ENCODE measurements at regions of chr10 and their contacts with region 1.

Region 1: GRCh38 chr10:16995867-16996529 is 133.6 kb downstream of the CUBN start:
- DNase-seq: peak; percentile 96
- H3K4me3 ChIP-seq: peak overlapping the region in 1 of 3 experiments; percentile 39
- H3K27ac ChIP-seq: peak overlapping the region; percentile 98
- H3K4me1 ChIP-seq: peaks cover 57% of the 10 kb centered on the region
- H3K27me3 ChIP-seq: no peaks in the 10 kb centered on the region
- CTCF ChIP-seq: no peak
- POLR2A ChIP-seq: peak; percentile 76

Region 2: GRCh38 chr10:16828114-16828568 is 167.9 kb before region 1 on chr10:
- CTCF ChIA-PET with region 1: interaction called, 3 read pairs
- POLR2A ChIA-PET with region 1: no interaction called
- dilution Hi-C with region 1: no loop called
- intact Hi-C with region 1: loop called (anchors 1 kb)
- DNase-seq: peak; percentile 93
- H3K4me3 ChIP-seq: peak overlapping the region in 1 of 3 experiments; percentile 51
- H3K27ac ChIP-seq: peak overlapping the region; percentile 71
- H3K4me1 ChIP-seq: peaks cover 34% of the 10 kb centered on the region
- H3K27me3 ChIP-seq: no peaks in the 10 kb centered on the region
- CTCF ChIP-seq: peak; percentile 35 to 39
- POLR2A ChIP-seq: no peak

Region 3: DNA sequence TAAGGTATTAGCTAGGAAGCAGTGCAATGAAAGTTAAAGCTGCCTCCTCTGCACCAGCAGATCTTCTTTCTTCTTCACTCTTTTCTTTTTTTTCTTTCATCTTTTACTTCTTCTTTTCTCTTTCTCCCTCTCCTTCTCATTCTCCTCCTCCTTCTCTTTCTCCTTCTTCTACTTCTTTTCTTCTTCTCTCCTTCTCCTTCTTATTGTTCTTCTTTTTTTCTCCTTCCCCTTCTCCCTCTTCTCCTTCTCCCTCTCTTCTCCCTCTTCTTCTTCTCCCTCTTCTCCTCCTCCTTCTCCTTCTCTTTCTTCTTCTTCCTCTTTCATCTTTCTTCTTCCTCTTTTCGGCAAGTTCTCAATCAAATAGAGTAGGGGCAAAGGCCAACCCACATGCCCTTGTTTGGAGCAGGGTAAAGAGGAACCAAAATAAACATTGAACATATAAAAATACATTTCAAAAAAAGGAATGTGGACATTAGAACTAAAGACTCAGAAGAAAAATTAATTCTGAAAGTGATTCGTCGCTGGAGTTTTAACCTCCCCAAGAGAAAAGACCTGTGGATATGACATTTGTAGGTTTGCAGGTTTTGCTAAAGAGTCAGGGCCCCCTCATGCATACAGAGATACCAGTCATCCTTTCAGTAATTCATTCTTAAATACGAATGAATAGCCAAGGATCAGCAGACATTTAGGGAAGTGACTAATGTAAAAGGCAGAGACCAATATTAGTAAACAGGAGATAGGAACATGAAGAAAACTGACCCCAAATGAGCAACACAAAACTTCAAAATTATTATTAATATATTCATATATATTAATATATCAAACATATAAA is 85.8 kb before region 1 on chr10:
- CTCF ChIA-PET with region 1: no interaction called
- POLR2A ChIA-PET with region 1: no interaction called
- dilution Hi-C with region 1: no loop called
- intact Hi-C with region 1: loop called (anchors 1 kb)
- DNase-seq: peak; percentile 60
- H3K4me3 ChIP-seq: no peak overlapping the region
- H3K27ac ChIP-seq: peak overlapping the region; percentile 82
- H3K4me1 ChIP-seq: peaks cover 20% of the 10 kb centered on the region
- H3K27me3 ChIP-seq: no peaks in the 10 kb centered on the region
- CTCF ChIP-seq: no peak
- POLR2A ChIP-seq: no peak

Region 4: DNA sequence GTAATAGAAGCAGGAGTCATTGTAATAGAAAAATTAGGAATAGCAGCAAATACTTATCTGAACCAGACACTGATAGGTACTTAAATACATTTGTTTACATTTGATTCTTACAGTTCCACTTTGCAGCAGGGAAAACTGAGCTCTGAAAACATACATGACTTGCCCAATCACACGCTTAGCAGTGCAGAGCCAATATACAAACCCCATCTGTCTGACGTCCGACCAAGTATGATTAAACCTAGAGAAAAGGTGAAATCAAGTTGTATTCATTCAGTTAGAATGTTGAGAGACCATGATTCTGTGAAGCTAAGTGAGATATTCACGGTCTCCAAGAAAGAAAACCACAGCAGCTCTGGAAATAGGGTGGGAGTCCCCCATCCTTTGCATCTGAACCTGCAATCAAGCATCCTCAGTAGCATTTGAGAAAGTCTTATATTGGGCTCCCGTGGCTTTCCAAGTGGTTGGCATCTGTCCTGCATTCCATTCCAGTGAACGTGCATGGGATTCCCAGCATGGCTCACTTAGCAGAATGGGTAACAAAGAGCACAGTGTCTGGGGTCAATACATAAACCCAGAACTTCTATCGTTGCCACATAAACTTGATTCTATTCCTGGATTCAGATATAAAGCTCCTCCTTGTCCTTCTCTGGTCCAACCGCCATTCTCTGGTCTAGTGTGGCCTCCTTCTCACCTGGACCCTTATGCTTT is 30.1 kb before region 1 on chr10:
- CTCF ChIA-PET with region 1: interaction called, 22 read pairs
- POLR2A ChIA-PET with region 1: interaction called, 19 read pairs
- dilution Hi-C with region 1: no loop called
- intact Hi-C with region 1: loop called (anchors 1 kb)
- DNase-seq: peak; percentile 91
- H3K4me3 ChIP-seq: no peak overlapping the region
- H3K27ac ChIP-seq: peak overlapping the region; percentile 98
- H3K4me1 ChIP-seq: peaks cover 40% of the 10 kb centered on the region
- H3K27me3 ChIP-seq: no peaks in the 10 kb centered on the region
- CTCF ChIP-seq: no peak
- POLR2A ChIP-seq: peak; percentile 44

Region 5: GRCh38 chr10:17029581-17030271 is 33.7 kb after region 1 on chr10:
- CTCF ChIA-PET with region 1: interaction called, 9 read pairs
- POLR2A ChIA-PET with region 1: interaction called, 3 read pairs
- dilution Hi-C with region 1: no loop called
- intact Hi-C with region 1: loop called (anchors 1 kb)
- DNase-seq: peak; percentile 96
- H3K4me3 ChIP-seq: peak overlapping the region in 1 of 3 experiments; percentile 34
- H3K27ac ChIP-seq: peak overlapping the region; percentile 99
- H3K4me1 ChIP-seq: peaks cover 59% of the 10 kb centered on the region
- H3K27me3 ChIP-seq: no peaks in the 10 kb centered on the region
- CTCF ChIP-seq: no peak
- POLR2A ChIP-seq: peak; percentile 71

Region 6: GRCh38 chr10:17200912-17201793 is 205.2 kb after region 1 on chr10 and contains the start of gene TRDMT1:
- CTCF ChIA-PET with region 1: interaction called, 5 read pairs
- POLR2A ChIA-PET with region 1: interaction called, 11 read pairs
- dilution Hi-C with region 1: no loop called
- intact Hi-C with region 1: loop called (anchors 2 kb)
- DNase-seq: peak; percentile 91
- H3K4me3 ChIP-seq: peak within 1 kb of the TSS; percentile 69 to 95 (median 91)
- H3K27ac ChIP-seq: peak within 1 kb of the TSS; percentile 100
- H3K4me1 ChIP-seq: peaks cover 28% of the 10 kb centered on the region
- H3K27me3 ChIP-seq: no peaks in the 10 kb centered on the region
- CTCF ChIP-seq: no peak
- POLR2A ChIP-seq: peak; percentile 86
- total RNA-seq, gene TRDMT1: 12.3 and 15.2 TPM in 2 replicates

Region 7: DNA sequence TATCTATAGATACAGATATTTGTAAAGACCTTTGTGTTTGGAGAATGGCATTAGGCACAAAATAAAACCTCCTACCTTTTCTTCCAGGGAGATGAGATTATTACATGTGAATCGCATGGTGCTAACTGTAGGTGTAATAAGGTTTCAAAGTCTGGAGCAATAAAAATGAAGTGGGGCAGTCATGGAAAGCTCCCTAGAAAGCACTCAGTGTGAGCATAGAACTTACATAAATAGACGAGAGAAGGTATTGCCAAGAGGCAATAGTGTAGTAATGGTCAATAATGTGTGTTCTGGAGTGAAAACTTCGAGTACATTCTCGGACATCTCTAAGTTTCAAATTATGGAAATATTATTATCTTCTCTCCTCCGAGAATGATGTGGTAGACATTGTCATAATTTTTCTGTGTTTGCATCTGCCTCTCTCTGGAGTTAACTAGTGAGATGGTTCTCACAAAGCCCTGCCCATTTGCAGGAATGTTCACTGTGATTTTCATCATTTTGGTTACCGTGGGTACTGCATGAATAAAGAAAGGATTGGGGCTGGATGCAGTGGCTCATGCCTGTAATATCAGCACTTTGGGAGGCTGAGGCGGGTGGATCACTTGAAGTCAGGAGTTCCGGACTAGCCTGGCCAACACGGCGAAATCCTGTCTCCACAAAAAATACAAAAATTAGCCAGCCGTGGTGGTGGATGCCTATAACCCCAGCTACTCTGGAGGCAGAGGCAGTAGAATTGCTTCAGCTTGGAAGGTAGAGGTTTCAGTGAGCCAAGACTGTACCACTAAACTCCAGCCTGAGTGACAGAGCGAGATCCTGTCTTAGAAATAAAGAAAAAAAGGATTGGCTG is 242.7 kb after region 1 on chr10:
- CTCF ChIA-PET with region 1: interaction called, 3 read pairs
- POLR2A ChIA-PET with region 1: interaction called, 5 read pairs
- dilution Hi-C with region 1: no loop called
- intact Hi-C with region 1: loop called (anchors 2 kb)
- DNase-seq: peak; percentile 81
- H3K4me3 ChIP-seq: no peak overlapping the region
- H3K27ac ChIP-seq: peak overlapping the region; percentile 40
- H3K4me1 ChIP-seq: peaks cover 20% of the 10 kb centered on the region
- H3K27me3 ChIP-seq: no peaks in the 10 kb centered on the region
- CTCF ChIP-seq: no peak
- POLR2A ChIP-seq: peak; percentile 92

Measured in endothelial cell of umbilical vein (primary cell).